Colonic mucosa (tissue), 4 donors: ENCODE measurements at regions of chr10 and their contacts with region 1.

Region 1: DNA sequence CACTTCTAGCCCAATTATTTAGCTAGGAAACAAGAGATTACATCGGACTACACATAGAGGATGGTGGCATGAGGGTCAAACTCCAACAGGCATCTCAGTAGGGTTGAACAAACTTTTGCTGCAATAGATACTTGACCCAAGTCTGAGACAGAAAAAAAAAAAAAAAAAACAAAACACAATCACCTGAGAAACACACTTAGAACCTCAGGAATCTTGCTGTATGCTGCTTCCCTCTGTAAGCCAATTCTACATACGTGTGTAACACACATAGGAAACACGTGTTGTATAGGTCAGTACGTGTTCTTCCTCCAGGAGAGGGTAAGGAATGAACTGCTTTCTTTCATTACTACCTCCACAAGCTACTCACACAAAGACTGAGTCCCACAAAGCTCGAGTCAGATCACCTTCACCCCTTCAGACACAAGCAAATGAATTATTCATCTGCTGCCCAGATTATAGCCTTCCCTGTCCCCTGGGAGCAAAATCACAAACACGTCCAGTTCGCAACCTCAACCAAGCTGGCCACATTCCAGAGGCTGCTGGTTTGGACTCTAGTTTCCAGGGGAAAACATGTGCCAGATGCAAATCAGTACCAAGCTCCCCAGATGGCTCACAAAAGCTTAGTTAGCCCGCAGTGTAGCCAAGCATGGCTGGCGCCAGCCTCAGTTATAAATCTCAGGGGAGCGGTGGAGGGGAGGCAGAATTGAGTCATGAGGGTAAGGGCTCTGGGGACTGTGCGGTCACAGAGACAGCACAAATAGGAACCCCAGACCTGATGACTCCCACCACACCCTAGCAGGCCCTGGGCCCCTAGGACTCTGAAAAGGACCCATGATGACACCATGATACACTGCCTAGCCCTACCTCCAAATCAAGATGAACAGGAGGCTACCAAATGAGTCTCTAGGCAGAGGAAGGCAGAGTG is 15.1 kb downstream of the PSAP start:
- DNase-seq: no peak
- H3K4me3 ChIP-seq: no peak overlapping the region
- H3K27ac ChIP-seq: peak overlapping the region; percentile 27
- H3K4me1 ChIP-seq: peaks cover 9% of the 10 kb centered on the region
- H3K27me3 ChIP-seq: no peaks in the 10 kb centered on the region
- CTCF ChIP-seq: no peak

Region 2: DNA sequence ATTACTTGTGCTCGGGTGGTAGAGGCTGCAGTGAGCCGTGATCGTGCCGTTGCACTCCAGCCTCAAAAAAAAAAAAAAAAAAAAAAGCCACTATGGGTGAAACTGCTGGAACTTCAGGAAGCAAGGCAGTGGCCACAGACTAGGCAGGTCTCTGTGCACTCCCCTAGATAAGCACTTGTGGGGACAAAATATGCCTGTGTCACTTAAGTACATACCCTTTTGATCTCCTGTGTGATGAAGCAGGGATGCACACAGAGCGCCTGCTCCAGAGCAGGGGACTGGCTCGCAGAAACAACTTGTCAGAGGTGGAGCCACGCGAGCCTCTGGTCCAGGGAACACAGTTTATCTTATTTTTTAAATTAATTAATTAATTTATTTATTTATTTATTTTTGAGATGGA is 58.0 kb after region 1 on chr10:
- intact Hi-C with region 1: loop called (anchors 10 kb)
- DNase-seq: no peak
- H3K4me3 ChIP-seq: no peak overlapping the region
- H3K27ac ChIP-seq: no peak overlapping the region
- H3K4me1 ChIP-seq: no peaks in the 10 kb centered on the region
- H3K27me3 ChIP-seq: no peaks in the 10 kb centered on the region
- CTCF ChIP-seq: no peak